GM12878 (cell line): ENCODE measurements at regions of chr1 and their contacts with region 1.

Region 1: DNA sequence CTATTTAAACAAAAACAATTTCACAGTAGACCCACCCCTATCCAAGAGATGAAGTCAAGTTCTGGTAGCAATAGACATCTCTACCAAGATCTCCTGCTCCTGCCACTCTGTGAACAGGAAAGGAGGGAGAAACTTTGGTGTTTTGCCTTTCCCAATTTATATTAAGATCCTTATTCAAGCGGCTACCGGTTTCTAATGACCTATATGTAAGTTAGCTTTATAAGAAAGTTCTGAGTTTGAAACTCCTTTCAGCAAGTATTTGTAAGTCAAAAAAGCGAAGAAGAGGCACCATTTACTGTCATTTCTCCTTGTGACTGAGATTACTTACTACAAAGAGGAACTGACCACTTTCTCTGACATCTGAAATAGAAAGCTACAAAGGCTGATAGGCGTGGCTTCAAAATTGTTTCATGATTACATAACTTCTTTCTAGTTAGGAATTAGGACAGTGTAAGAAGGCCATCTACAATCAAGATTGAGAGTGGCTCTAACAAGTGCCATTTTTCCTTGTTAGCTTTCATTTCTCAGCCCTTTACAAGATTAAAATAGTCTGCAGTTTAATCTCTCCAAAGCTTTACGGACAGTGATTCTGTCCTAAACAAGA is at the start of gene MNDA:
- DNase-seq: peak; percentile 82
- ATAC-seq: peak; percentile 90
- H3K4me3 ChIP-seq: peak within 1 kb of the TSS; percentile 68
- H3K27ac ChIP-seq: peak within 1 kb of the TSS; percentile 97
- H3K4me1 ChIP-seq: peaks cover 9% of the 10 kb centered on the region; the same call in 1 of the 2 replicates
- H3K27me3 ChIP-seq: no peaks in the 10 kb centered on the region
- CTCF ChIP-seq: no peak
- EP300 ChIP-seq: peak; percentile 53 to 61; a peak in 1 of 4 replicates
- POLR2A ChIP-seq: peak; percentile 41; the same call in 1 of the 2 replicates
- RAD21 ChIP-seq: no peak
- polyA plus RNA-seq, gene MNDA: 81.9 to 91.8 TPM

Region 2: GRCh38 chr1:158735848-158736247 is 95.2 kb before region 1 on chr1:
- CTCF ChIA-PET with region 1: no interaction called
- POLR2A ChIA-PET with region 1: no interaction called
- RAD21 ChIA-PET with region 1: no interaction called
- SMC1A ChIA-PET with region 1: no interaction called
- in situ Hi-C with region 1: no loop called
- intact Hi-C with region 1: no loop called
- DNase-seq: no peak
- ATAC-seq: no peak
- H3K4me3 ChIP-seq: no peak overlapping the region
- H3K27ac ChIP-seq: no peak overlapping the region
- H3K4me1 ChIP-seq: no peaks in the 10 kb centered on the region
- H3K27me3 ChIP-seq: no peaks in the 10 kb centered on the region
- CTCF ChIP-seq: no peak
- EP300 ChIP-seq: no peak
- POLR2A ChIP-seq: no peak
- RAD21 ChIP-seq: no peak

Region 3: GRCh38 chr1:158819461-158820443 is 11.3 kb before region 1 on chr1:
- CTCF ChIA-PET with region 1: interaction called, 3 read pairs
- POLR2A ChIA-PET with region 1: interaction called, 4 read pairs
- RAD21 ChIA-PET with region 1: interaction called, 18 read pairs
- SMC1A ChIA-PET with region 1: interaction called, 31 read pairs
- in situ Hi-C with region 1: no loop called
- intact Hi-C with region 1: no loop called
- DNase-seq: peak; percentile 35
- ATAC-seq: peak; percentile 90
- H3K4me3 ChIP-seq: no peak overlapping the region
- H3K27ac ChIP-seq: no peak overlapping the region
- H3K4me1 ChIP-seq: peaks cover 7% of the 10 kb centered on the region; the same call in 1 of the 2 replicates
- H3K27me3 ChIP-seq: no peaks in the 10 kb centered on the region
- CTCF ChIP-seq: no peak
- EP300 ChIP-seq: no peak
- POLR2A ChIP-seq: no peak
- RAD21 ChIP-seq: no peak

Region 4: GRCh38 chr1:158901623-158902022 is 70.6 kb after region 1 on chr1:
- CTCF ChIA-PET with region 1: no interaction called
- POLR2A ChIA-PET with region 1: no interaction called
- RAD21 ChIA-PET with region 1: no interaction called
- SMC1A ChIA-PET with region 1: no interaction called
- in situ Hi-C with region 1: no loop called
- intact Hi-C with region 1: no loop called
- DNase-seq: no peak
- ATAC-seq: no peak
- H3K4me3 ChIP-seq: no peak overlapping the region
- H3K27ac ChIP-seq: no peak overlapping the region
- H3K4me1 ChIP-seq: no peaks in the 10 kb centered on the region
- H3K27me3 ChIP-seq: no peaks in the 10 kb centered on the region
- CTCF ChIP-seq: no peak
- EP300 ChIP-seq: no peak
- POLR2A ChIP-seq: no peak
- RAD21 ChIP-seq: no peak

Region 5: GRCh38 chr1:159009704-159010361 is 178.8 kb after region 1 on chr1 and contains the start of gene IFI16:
- CTCF ChIA-PET with region 1: interaction called, 3 read pairs
- POLR2A ChIA-PET with region 1: interaction called, 8 read pairs
- RAD21 ChIA-PET with region 1: interaction called, 3 read pairs
- SMC1A ChIA-PET with region 1: interaction called, 10 read pairs
- in situ Hi-C with region 1: loop called (anchors 5 kb)
- intact Hi-C with region 1: loop called (anchors 2 kb)
- DNase-seq: peak; percentile 87
- ATAC-seq: peak; percentile 73
- H3K4me3 ChIP-seq: peak within 1 kb of the TSS; percentile 91
- H3K27ac ChIP-seq: peak within 1 kb of the TSS; percentile 100
- H3K4me1 ChIP-seq: peaks cover 15% of the 10 kb centered on the region; the same call in 1 of the 2 replicates
- H3K27me3 ChIP-seq: no peaks in the 10 kb centered on the region
- CTCF ChIP-seq: no peak
- EP300 ChIP-seq: peak; percentile 25 to 37; a peak in 1 of 4 replicates
- POLR2A ChIP-seq: peak; percentile 80
- RAD21 ChIP-seq: no peak
- polyA plus RNA-seq, gene IFI16: 191 to 255 TPM